ENCODE measurements at regions of chr20 and their contacts with region 1.

Region 1: GRCh38 chr20:62407221-62407992 is at the start of gene CABLES2:
- DNase-seq: peak; percentile 95
- ATAC-seq: peak; percentile 79 to 96 (median 92)
- H3K4me3 ChIP-seq: peak within 1 kb of the TSS; percentile 42 to 81 (median 62)
- H3K27ac ChIP-seq: peak within 1 kb of the TSS in 9 of 10 donors; percentile 2 to 82 (median 62)
- H3K4me1 ChIP-seq: peaks cover 14 to 38% (median 31%) of the 10 kb centered on the region in 9 donors
- H3K27me3 ChIP-seq: no peaks in the 10 kb centered on the region
- CTCF ChIP-seq: peak in 5 of 9 donors; percentile 3 to 31 (median 15)
- total RNA-seq, gene CABLES2: 5.6 to 11.9 (median 8.0) TPM

Region 2: DNA sequence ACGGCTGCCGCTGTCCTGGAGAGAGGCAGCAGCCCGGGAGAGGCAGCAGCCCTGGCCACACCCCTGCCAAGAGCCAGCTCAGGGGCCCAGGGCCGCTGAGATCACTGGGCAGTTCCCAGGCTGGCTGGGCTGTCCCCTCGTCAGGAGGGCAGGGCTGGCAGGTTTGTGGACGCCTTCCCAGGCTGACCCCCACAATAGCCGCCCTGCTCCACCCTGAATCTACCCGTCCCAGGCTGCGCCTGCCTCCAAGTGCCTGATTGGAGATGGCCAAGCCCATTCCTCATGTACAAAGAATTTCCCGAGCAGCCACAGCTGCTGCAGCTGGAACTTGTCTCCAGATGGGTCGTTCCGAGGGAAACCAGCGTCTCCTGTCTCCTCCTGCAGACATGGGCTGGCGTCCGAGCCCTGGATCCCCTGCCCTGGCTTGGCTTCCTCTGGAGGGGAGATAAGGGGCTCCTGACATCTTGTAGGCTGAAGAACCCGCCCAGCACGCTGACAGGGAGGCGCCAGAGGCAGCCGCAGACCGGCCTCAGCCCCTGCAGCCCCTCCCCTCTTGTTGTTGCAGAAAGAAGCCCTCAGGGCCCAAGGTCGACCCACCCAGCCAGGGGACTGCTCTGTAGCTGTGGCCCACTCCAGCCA is 77.8 kb after region 1 on chr20:
- intact Hi-C with region 1: loop called in 3 of 10 experiments (anchors 5 to 10 kb)
- DNase-seq: peak in 1 of 2 donors; percentile 27
- ATAC-seq: peak; percentile 36 to 75 (median 52)
- H3K4me3 ChIP-seq: peak overlapping the region in 3 of 10 donors; percentile 7 to 13 (median 10)
- H3K27ac ChIP-seq: peak overlapping the region in 4 of 10 donors; percentile 3 to 39 (median 14)
- H3K4me1 ChIP-seq: peaks cover 9 to 52% (median 27%) of the 10 kb centered on the region in 9 donors
- H3K27me3 ChIP-seq: peaks cover 0 to 83% (median 74%) of the 10 kb centered on the region in 7 donors
- CTCF ChIP-seq: no peak

Region 3: GRCh38 chr20:62494980-62495748 is 87.8 kb after region 1 on chr20:
- intact Hi-C with region 1: loop called in 5 of 10 experiments (anchors 2 to 10 kb)
- DNase-seq: no peak
- ATAC-seq: peak in 7 of 8 donors; percentile 13 to 60 (median 29)
- H3K4me3 ChIP-seq: no peak overlapping the region
- H3K27ac ChIP-seq: peak overlapping the region in 9 of 10 donors; percentile 49 to 81 (median 70)
- H3K4me1 ChIP-seq: peaks cover 5 to 46% (median 28%) of the 10 kb centered on the region in 9 donors
- H3K27me3 ChIP-seq: peaks cover 0 to 7% (median 0%) of the 10 kb centered on the region in 7 donors
- CTCF ChIP-seq: no peak

Region 4: DNA sequence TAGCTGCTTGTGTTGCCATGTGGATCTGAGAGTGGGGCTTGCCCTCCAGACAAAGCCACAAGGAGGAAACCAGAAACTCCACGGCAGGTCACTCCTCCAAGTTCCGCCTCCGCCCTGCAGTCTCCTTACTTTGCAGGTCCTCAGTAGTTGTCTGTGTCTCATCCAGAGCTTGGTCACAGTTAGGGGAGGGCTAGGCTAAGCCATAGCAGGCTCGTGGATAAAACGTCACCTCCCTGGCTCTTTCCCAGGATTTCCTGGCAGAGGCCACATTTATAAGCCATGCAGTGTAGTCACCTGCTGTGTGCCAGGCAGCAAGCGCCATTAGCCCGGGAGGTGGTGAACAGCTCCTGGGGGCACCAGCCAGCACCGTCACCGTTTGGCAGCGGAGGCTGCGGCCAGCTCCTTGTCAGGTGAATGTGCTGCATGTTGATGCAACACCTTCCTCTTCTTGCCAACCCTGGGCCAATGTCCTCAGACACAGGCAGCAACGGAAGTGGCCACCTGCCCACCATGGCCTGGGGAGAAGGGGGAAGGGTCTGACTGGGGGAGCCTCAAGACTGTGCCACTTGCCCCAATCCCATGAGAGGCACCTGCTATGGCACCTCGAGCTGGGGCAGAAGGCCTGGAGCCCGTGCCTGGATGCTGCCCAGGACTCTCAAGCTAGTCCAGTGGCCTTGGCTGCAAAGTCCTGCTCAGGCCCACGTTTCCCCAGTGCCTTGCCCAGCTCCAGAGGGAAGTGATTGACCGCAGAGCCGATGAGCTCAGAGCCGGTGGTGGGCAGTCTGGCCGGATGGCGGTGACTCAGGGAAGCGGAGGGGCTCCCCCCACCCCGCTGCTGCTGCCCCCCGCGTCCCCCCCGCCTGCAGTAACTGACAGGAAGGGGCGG is 195.9 kb after region 1 on chr20:
- intact Hi-C with region 1: loop called in 4 of 10 experiments (anchors 10 kb)
- DNase-seq: peak; percentile 54 to 61
- ATAC-seq: peak; percentile 67 to 93 (median 76)
- H3K4me3 ChIP-seq: peak overlapping the region in 3 of 10 donors; percentile 2 to 41 (median 15)
- H3K27ac ChIP-seq: peak overlapping the region in 9 of 10 donors; percentile 9 to 86 (median 32)
- H3K4me1 ChIP-seq: peaks cover 7 to 63% (median 28%) of the 10 kb centered on the region in 9 donors
- H3K27me3 ChIP-seq: peaks cover 0 to 20% (median 3%) of the 10 kb centered on the region in 7 donors
- CTCF ChIP-seq: no peak

Region 5: GRCh38 chr20:62616728-62617621 is 209.6 kb after region 1 on chr20:
- intact Hi-C with region 1: loop called in 2 of 10 experiments (anchors 10 kb)
- DNase-seq: peak; percentile 66 to 81
- ATAC-seq: peak; percentile 73 to 94 (median 84)
- H3K4me3 ChIP-seq: no peak overlapping the region
- H3K27ac ChIP-seq: peak overlapping the region; percentile 57 to 94 (median 84)
- H3K4me1 ChIP-seq: peaks cover 19 to 34% (median 28%) of the 10 kb centered on the region in 9 donors
- H3K27me3 ChIP-seq: peaks cover 0 to 16% (median 0%) of the 10 kb centered on the region in 7 donors
- CTCF ChIP-seq: peak; percentile 93 to 98 (median 96)

Region 6: GRCh38 chr20:62793912-62794724 is 386.7 kb after region 1 on chr20:
- intact Hi-C with region 1: loop called in 2 of 10 experiments (anchors 10 kb)
- DNase-seq: peak; percentile 97 to 99
- ATAC-seq: peak; percentile 91 to 95 (median 92)
- H3K4me3 ChIP-seq: peak overlapping the region; percentile 14 to 97 (median 69)
- H3K27ac ChIP-seq: peak overlapping the region; percentile 70 to 96 (median 92)
- H3K4me1 ChIP-seq: peaks cover 6 to 50% (median 38%) of the 10 kb centered on the region in 9 donors
- H3K27me3 ChIP-seq: no peaks in the 10 kb centered on the region
- CTCF ChIP-seq: no peak

Measured in heart right ventricle (tissue), 16 donors.